GM12878 (cell line): ENCODE measurements at regions of chr20 and their contacts with region 1.

Region 1: GRCh38 chr20:36773597-36774390 is at the start of gene DSN1:
- DNase-seq: peak; percentile 92
- ATAC-seq: peak; percentile 92
- H3K4me3 ChIP-seq: peak within 1 kb of the TSS; percentile 93
- H3K27ac ChIP-seq: peak within 1 kb of the TSS; percentile 94
- H3K4me1 ChIP-seq: peaks cover 35% of the 10 kb centered on the region
- H3K27me3 ChIP-seq: no peaks in the 10 kb centered on the region
- CTCF ChIP-seq: peak in 2 of 3 experiments; percentile 43 to 59; a peak in 3 of 6 replicates
- EP300 ChIP-seq: no peak
- POLR2A ChIP-seq: peak; percentile 85; the same call in 1 of the 2 replicates
- RAD21 ChIP-seq: 0 out of 2 replicates have a peak, but pooled peaks have one; percentile 29
- polyA plus RNA-seq, gene DSN1: 21.2 to 21.4 TPM

Region 2: DNA sequence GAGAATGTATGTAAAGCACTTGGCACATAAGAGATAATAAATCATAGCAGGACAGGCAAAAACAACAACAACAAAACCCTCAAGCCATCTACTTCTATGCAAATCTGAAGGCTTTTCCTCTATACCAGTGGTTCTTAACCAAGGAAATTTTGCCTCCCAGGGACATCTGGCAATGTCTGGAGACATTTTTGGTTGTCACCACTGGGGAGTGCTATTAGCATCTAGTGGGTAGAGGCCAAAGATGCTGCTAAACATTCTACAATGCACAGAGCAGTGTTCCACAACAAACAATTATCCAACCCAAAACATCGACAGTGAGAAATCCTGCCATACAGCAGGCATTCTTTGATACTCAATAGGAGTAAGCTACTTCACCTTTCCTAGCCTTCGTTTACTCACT is 56.1 kb before region 1 on chr20:
- CTCF ChIA-PET with region 1: no interaction called
- POLR2A ChIA-PET with region 1: no interaction called
- RAD21 ChIA-PET with region 1: no interaction called
- SMC1A ChIA-PET with region 1: no interaction called
- in situ Hi-C with region 1: no loop called
- intact Hi-C with region 1: no loop called
- DNase-seq: no peak
- ATAC-seq: no peak
- H3K4me3 ChIP-seq: no peak overlapping the region
- H3K27ac ChIP-seq: no peak overlapping the region
- H3K4me1 ChIP-seq: no peaks in the 10 kb centered on the region
- H3K27me3 ChIP-seq: no peaks in the 10 kb centered on the region
- CTCF ChIP-seq: peak; percentile 31 to 36 (median 32); a peak in 4 of 6 replicates
- EP300 ChIP-seq: no peak
- POLR2A ChIP-seq: no peak
- RAD21 ChIP-seq: peak; percentile 40

Region 3: GRCh38 chr20:36745927-36746659 is 27.7 kb before region 1 on chr20 and contains the start of gene NDRG3:
- CTCF ChIA-PET with region 1: interaction called, 12 read pairs
- POLR2A ChIA-PET with region 1: interaction called, 6 read pairs
- RAD21 ChIA-PET with region 1: interaction called, 3 read pairs
- SMC1A ChIA-PET with region 1: interaction called, 3 read pairs
- in situ Hi-C with region 1: no loop called
- intact Hi-C with region 1: no loop called
- DNase-seq: peak; percentile 68
- ATAC-seq: peak; percentile 99
- H3K4me3 ChIP-seq: peak within 1 kb of the TSS; percentile 94
- H3K27ac ChIP-seq: peak within 1 kb of the TSS; percentile 74; the same call in 1 of the 2 replicates
- H3K4me1 ChIP-seq: no peaks in the 10 kb centered on the region
- H3K27me3 ChIP-seq: no peaks in the 10 kb centered on the region
- CTCF ChIP-seq: peak in 1 of 3 experiments; percentile 10; a peak in 2 of 6 replicates
- EP300 ChIP-seq: no peak
- POLR2A ChIP-seq: peak; percentile 63
- RAD21 ChIP-seq: no peak
- polyA plus RNA-seq, gene NDRG3: 11.2 to 12.7 TPM

Region 4: GRCh38 chr20:36760647-36761046 is 13.1 kb before region 1 on chr20:
- CTCF ChIA-PET with region 1: interaction called, 32 read pairs
- POLR2A ChIA-PET with region 1: interaction called, 4 read pairs
- RAD21 ChIA-PET with region 1: interaction called, 8 read pairs
- SMC1A ChIA-PET with region 1: interaction called, 26 read pairs
- in situ Hi-C with region 1: no loop called
- intact Hi-C with region 1: no loop called
- DNase-seq: no peak
- ATAC-seq: no peak
- H3K4me3 ChIP-seq: no peak overlapping the region
- H3K27ac ChIP-seq: no peak overlapping the region
- H3K4me1 ChIP-seq: peaks cover 13% of the 10 kb centered on the region
- H3K27me3 ChIP-seq: no peaks in the 10 kb centered on the region
- CTCF ChIP-seq: no peak
- EP300 ChIP-seq: no peak
- POLR2A ChIP-seq: no peak
- RAD21 ChIP-seq: no peak